Ovary (tissue), 10 donors: ENCODE measurements at regions of chr18 and their contacts with region 1.

Region 1: GRCh38 chr18:59516356-59517155 is 157.5 kb upstream of the LMAN1 start:
- DNase-seq: peak in 4 of 5 donors; percentile 58 to 80 (median 72)
- H3K4me3 ChIP-seq: no peak overlapping the region
- H3K27ac ChIP-seq: peak overlapping the region in 1 of 2 donors; percentile 69
- H3K4me1 ChIP-seq: peaks cover 30% of the 10 kb centered on the region
- H3K27me3 ChIP-seq: no peaks in the 10 kb centered on the region
- CTCF ChIP-seq: no peak
- EP300 ChIP-seq: peak; percentile 75
- POLR2A ChIP-seq: no peak

Region 2: DNA sequence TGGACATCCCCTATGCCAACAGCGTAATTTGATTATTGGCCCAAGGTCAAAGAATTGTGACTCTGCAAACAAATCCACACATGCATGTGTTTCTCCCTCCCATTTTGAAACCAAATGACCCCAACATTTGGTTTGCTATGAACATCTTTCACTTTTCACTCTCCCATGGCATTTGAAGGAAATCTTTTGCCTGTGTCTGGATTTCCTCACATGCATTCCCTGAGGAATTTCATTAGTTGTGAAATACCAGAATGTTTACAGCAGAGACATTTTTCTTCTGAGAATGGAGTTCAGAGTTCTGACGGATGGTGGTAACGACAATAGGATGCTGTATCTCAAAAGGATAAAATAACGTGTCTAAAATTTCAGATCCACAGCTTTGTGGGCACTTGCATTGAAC is 97.2 kb before region 1 on chr18:
- intact Hi-C with region 1: no loop called
- DNase-seq: no peak
- H3K4me3 ChIP-seq: no peak overlapping the region
- H3K27ac ChIP-seq: no peak overlapping the region
- H3K4me1 ChIP-seq: peaks cover 7% of the 10 kb centered on the region
- H3K27me3 ChIP-seq: no peaks in the 10 kb centered on the region
- CTCF ChIP-seq: no peak
- EP300 ChIP-seq: no peak
- POLR2A ChIP-seq: no peak

Region 3: GRCh38 chr18:59612381-59612780 is 95.8 kb after region 1 on chr18:
- intact Hi-C with region 1: loop called in 1 of 4 experiments (anchors 10 kb)
- DNase-seq: no peak
- H3K4me3 ChIP-seq: no peak overlapping the region
- H3K27ac ChIP-seq: no peak overlapping the region
- H3K4me1 ChIP-seq: peaks cover 25% of the 10 kb centered on the region
- H3K27me3 ChIP-seq: no peaks in the 10 kb centered on the region
- CTCF ChIP-seq: no peak
- EP300 ChIP-seq: no peak
- POLR2A ChIP-seq: no peak

Region 4: GRCh38 chr18:59623456-59624368 is 107.2 kb after region 1 on chr18:
- intact Hi-C with region 1: loop called in 2 of 4 experiments (anchors 10 kb)
- DNase-seq: peak in 2 of 5 donors; percentile 45 to 52
- H3K4me3 ChIP-seq: no peak overlapping the region
- H3K27ac ChIP-seq: peak overlapping the region; percentile 65 to 77
- H3K4me1 ChIP-seq: peaks cover 28% of the 10 kb centered on the region
- H3K27me3 ChIP-seq: no peaks in the 10 kb centered on the region
- CTCF ChIP-seq: no peak
- EP300 ChIP-seq: peak; percentile 5
- POLR2A ChIP-seq: no peak

Region 5: GRCh38 chr18:59697236-59697932 is 180.8 kb after region 1 on chr18 and contains the start of gene CCBE1:
- intact Hi-C with region 1: loop called in 1 of 4 experiments (anchors 10 kb)
- DNase-seq: peak; percentile 79 to 92 (median 89)
- H3K4me3 ChIP-seq: peak within 1 kb of the TSS; percentile 51
- H3K27ac ChIP-seq: peak within 1 kb of the TSS; percentile 40 to 82
- H3K4me1 ChIP-seq: peaks cover 8% of the 10 kb centered on the region
- H3K27me3 ChIP-seq: no peaks in the 10 kb centered on the region
- CTCF ChIP-seq: peak; percentile 86 to 97 (median 87)
- EP300 ChIP-seq: no peak
- POLR2A ChIP-seq: peak; percentile 25
- total RNA-seq, gene CCBE1: 15.9 to 109 (median 43.9) TPM